ENCODE measurements at regions of chr14 and their contacts with region 1.

Region 1: GRCh38 chr14:76918751-76919543 is 92.7 kb downstream of the LRRC74A start:
- DNase-seq: peak; percentile 82 to 91 (median 87)
- ATAC-seq: peak; percentile 87
- H3K4me3 ChIP-seq: no peak overlapping the region
- H3K4me1 ChIP-seq: peaks cover 22% of the 10 kb centered on the region
- CTCF ChIP-seq: no peak

Region 2: GRCh38 chr14:76882651-76883050 is 36.3 kb before region 1 on chr14:
- intact Hi-C with region 1: no loop called
- DNase-seq: no peak
- ATAC-seq: no peak
- H3K4me3 ChIP-seq: no peak overlapping the region
- H3K4me1 ChIP-seq: no peaks in the 10 kb centered on the region
- CTCF ChIP-seq: no peak

Region 3: DNA sequence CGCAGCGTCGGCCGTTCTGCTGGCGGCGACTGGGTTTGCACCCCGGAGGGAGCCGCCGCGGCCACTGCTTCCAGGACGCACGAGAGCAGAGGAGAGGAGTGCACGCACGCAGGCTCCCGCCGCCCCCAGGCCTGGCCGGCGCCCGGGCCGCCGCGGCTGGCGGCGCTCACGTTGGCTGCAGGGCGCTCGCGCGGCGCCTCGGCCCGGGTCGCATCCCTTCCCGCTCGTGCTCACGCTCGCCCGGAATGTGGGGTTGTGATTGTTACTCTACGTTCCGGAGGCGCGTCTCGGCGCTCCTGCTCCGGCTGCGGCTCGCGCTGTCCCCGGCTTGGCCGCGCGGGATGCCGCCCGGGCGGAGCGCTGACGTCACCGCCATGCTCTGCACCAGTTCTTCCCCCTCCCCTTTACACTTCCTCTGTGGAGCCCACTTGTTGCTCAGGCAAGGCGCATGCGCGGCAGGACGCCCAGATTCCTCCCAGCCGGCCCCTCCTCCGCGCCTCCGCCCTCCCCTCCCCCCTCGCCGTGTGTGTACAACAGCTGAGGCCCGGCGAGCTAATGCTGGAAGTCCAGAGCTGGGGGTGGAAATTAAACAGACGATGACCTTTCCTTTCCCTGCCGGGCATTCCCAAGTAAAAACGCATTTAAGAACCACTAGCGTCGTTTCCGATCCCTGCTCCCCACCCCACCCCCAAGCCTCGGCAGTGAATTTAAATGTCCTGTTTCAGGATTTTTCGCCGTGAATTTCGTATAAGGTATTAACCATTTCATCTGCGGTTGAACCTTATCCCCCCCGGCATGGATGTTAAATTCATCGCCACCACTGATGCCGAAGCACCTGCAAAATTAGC is 109.7 kb after region 1 on chr14 and contains the start of gene IRF2BPL:
- intact Hi-C with region 1: no loop called
- DNase-seq: peak; percentile 99 to 100 (median 99)
- ATAC-seq: peak; percentile 78
- H3K4me3 ChIP-seq: peak within 1 kb of the TSS; percentile 46
- H3K4me1 ChIP-seq: peaks cover 47% of the 10 kb centered on the region
- CTCF ChIP-seq: no peak
- total RNA-seq, gene IRF2BPL: 15.1 to 74.1 (median 19.3) TPM

Region 4: GRCh38 chr14:77053046-77053841 is 134.3 kb after region 1 on chr14:
- intact Hi-C with region 1: loop called in 1 of 2 experiments (anchors 5 kb)
- DNase-seq: peak; percentile 75 to 78 (median 77)
- ATAC-seq: peak; percentile 66
- H3K4me3 ChIP-seq: no peak overlapping the region
- H3K4me1 ChIP-seq: peaks cover 9% of the 10 kb centered on the region
- CTCF ChIP-seq: peak; percentile 69

Measured in mucosa of descending colon (tissue), 3 donors.